Testis (tissue), 5 donors: ENCODE measurements at regions of chr9 and their contacts with region 1.

Region 1: DNA sequence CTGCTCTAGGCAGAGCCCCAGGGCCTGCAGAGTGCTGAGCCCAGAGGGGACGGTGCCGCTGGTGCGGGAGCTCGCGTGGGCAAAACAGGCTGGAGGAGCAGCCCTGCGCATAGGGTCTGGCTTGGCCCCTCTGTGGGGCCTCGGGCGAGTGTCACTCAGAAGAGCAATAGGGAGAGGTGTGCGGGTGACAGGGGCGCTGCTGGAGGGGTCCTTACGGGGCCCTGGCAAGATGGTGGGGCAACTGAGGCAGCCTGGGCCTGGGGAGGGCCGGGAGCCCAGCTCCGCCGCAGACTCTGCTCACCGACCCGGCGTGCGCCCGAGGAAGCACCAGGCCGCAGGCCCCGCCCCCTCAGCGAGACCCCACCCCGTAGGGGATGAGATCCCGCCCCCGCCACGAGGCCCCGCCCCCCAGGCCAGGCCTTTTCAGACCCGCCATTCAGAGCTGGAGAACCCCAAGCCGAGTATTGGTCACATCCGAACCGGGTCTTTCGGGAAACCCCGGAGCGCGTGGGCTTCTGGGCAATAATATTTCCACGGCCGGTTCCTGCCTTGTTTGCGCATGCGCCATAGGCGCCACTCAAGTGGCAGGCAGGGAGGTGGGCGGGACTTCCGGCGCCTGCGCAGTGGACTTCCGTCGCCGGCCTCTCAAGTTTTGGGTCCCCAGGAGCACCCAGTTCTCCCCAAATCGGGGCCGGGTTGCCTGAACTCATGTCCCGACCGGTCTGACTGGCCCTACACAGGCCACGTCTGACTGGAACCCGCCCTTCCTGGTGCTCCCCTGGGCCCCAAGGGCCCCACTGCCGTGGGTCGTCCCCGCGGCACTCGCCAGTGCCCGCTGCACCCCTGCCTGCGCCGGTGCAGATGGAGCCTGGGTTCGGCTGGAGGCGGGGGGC is 1.3 kb upstream of the RNF208 start:
- DNase-seq: peak; percentile 96
- H3K4me3 ChIP-seq: peak overlapping the region; percentile 56 to 76
- H3K27ac ChIP-seq: peak overlapping the region; percentile 59 to 68
- H3K4me1 ChIP-seq: peaks cover 26% of the 10 kb centered on the region
- H3K27me3 ChIP-seq: no peaks in the 10 kb centered on the region
- CTCF ChIP-seq: no peak
- POLR2A ChIP-seq: no peak

Region 2: GRCh38 chr9:137114610-137115391 is 108.5 kb before region 1 on chr9 and contains the start of gene DPP7:
- intact Hi-C with region 1: loop called (anchors 10 kb)
- DNase-seq: peak; percentile 80
- H3K4me3 ChIP-seq: peak within 1 kb of the TSS; percentile 76 to 78
- H3K27ac ChIP-seq: peak within 1 kb of the TSS; percentile 39 to 71
- H3K4me1 ChIP-seq: peaks cover 22% of the 10 kb centered on the region
- H3K27me3 ChIP-seq: no peaks in the 10 kb centered on the region
- CTCF ChIP-seq: peak in 1 of 3 experiments; percentile 8
- POLR2A ChIP-seq: no peak
- total RNA-seq, gene DPP7: 207 to 215 TPM